Right ventricle myocardium inferior (tissue), 1 donor: ENCODE measurements at regions of chr12 and their contacts with region 1.

Region 1: GRCh38 chr12:13173012-13173932 is 23.3 kb upstream of the EMP1 start:
- DNase-seq: peak; percentile 78
- ATAC-seq: peak; percentile 92

Region 2: DNA sequence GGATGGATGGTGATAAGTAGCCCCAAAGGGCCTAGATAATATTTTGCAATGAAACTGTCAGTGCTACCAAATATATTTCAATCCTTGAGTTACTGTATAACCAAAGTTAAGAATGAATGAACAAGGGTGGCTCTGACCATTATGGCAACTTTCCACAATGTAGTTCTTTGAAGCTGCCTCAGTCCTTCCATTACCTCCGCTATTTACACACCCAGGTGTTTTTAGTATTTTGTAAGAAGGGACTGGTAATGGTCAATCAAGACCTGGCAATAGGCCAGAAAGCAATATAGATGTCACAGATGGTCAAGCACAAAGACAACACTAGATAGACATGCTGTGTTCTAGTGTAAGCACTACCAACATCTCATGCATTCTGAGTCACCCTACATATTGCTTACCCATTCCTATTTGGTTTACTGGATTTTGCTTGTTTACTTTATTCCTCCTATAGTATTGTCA is 626.9 kb before region 1 on chr12:
- intact Hi-C with region 1: no loop called
- DNase-seq: no peak
- ATAC-seq: no peak

Region 3: GRCh38 chr12:12757121-12757520 is 416.2 kb before region 1 on chr12:
- intact Hi-C with region 1: no loop called
- DNase-seq: no peak
- ATAC-seq: no peak

Region 4: DNA sequence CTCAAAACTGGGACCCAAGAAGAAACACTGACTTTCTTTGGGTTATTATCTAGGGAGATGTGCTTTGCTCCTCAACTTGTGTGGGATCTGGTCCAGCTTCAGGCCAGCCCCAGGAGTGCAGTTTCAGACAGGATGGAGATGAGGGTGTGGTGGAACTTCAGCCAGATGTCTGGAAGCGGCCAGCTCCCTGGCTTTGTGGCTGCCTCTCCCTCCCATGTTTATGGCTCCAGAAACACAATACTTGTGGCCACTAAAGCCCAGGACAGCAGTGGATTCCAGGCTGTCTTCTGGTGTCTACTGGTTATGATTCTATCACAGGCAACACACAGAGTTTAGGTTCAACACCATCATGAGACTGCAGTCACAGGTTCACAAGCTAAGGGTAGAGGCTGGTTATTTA is 21.0 kb before region 1 on chr12:
- intact Hi-C with region 1: loop called (anchors 1 kb)
- DNase-seq: peak; percentile 77
- ATAC-seq: peak; percentile 85

Region 5: DNA sequence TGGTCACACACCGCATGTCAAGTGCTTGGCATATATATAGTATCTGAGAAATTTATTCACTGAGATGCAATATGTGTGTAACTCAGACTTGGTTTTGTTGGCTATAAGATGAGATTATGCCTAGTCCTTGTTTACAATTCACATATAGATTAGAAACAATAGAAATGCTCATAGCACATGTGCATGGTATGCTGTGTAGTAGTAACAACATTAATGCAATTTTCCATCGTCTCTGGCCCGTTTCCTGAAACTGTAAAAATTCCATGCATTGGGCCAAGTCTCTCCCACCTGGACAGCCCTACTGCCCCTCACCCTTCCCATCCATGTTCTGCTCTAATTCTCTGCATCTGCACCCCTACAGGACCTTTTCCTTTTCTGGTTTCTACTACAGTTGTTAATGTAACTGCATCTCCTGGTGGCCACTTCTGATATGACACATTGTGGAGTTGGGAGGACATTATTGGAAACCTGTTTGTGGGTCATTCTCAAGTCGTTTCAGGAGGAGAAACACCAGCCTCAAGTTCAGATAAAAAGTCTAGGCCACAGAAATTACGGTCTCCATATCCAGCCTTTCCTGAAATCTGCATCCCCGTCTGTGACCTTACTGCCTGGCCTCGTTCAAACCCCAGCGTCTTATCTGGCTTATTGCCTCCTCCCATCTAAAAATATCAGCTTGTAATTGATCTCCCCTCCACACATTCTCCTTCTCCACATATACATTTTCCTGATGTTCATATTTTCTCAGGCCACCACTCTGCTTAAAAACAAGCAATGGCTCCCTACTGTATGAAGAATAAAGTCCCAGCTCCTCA is 60.8 kb after region 1 on chr12:
- intact Hi-C with region 1: no loop called
- DNase-seq: no peak
- ATAC-seq: peak; percentile 44